ENCODE measurements at regions of chr1 and their contacts with region 1.

Region 1: GRCh38 chr1:172398970-172399755 is 21.3 kb upstream of the C1orf105 start:
- DNase-seq: peak; percentile 72
- H3K4me3 Mint-ChIP-seq: peak overlapping the region; percentile 7
- H3K27ac Mint-ChIP-seq: peak overlapping the region; percentile 61
- H3K4me1 Mint-ChIP-seq: peaks cover 46% of the 10 kb centered on the region
- H3K27me3 Mint-ChIP-seq: no peaks in the 10 kb centered on the region

Region 2: DNA sequence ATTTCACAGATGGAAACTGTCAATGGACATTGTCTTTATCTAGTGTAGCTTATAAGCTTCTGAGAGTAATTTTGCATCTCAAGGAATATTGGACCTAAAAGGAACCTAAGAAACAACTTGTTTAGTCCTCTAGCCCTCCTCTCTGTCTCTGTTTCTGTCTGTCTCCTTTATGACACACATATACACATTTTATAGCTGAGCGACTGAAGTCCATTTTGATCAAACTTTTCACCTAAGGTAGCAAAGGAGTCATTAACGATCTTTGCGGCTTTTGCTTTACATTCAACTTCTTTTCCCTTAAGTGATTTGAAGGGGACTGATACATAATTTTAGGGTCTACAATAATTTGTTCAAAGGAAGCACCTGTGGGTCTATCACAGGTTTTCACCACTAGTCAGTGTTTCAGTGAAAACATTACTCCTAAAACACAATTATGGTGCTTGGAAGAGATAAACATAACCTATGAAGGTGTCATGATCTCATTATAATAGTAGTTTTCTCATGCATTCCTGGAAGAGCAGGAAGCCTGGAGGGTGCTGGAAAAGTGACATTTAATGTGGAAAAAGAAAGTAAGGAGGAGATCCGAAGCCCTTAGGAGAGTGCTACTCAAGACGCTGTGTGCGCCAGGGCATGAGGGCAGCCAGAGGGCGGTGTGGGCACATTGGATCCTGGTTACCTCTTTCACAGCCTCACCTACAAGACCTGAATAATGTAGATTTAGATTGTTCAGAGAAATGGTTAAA is 309.2 kb before region 1 on chr1:
- intact Hi-C with region 1: loop called (anchors 1 kb)
- DNase-seq: peak; percentile 86
- H3K4me3 Mint-ChIP-seq: no peak overlapping the region
- H3K27ac Mint-ChIP-seq: no peak overlapping the region
- H3K4me1 Mint-ChIP-seq: peaks cover 7% of the 10 kb centered on the region
- H3K27me3 Mint-ChIP-seq: no peaks in the 10 kb centered on the region

Region 3: DNA sequence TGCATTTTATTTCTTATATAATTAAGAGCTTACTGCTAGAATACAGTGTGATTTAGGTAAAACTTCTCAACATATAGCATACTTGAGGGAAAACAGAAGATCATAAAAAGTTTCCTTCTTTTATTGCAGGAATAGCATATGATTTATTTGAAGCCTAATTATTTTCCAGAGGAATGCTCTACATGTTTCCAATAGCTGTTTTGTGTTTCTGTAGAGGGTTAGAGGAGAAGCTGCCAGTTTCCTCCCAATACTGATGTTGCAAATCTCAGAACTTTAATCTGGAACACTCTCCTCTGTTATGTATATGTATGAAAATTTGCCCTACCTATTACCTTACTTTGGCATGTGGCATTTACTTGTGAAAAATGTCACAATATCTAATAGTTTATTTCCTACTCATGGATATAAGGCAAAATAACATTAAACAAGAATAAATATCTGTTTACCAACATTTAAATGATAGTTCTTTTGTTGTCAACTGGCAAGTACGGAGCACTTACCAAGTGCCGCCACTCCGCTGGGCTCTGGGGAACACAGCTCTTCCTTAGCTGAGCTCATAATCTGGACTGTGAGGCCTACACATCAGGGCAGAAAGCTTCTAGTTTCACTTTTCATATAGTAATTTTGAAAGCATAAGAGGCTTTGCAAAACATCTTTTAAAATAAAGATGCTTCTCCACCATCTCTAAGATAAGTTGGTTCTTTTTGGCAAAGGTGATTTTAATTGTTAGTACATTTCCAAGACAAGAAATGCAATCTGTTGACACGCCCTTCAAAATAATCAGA is 218.5 kb before region 1 on chr1:
- intact Hi-C with region 1: loop called (anchors 2 kb)
- DNase-seq: peak; percentile 84
- H3K4me3 Mint-ChIP-seq: peak overlapping the region; percentile 82
- H3K27ac Mint-ChIP-seq: peak overlapping the region; percentile 96
- H3K4me1 Mint-ChIP-seq: peaks cover 38% of the 10 kb centered on the region
- H3K27me3 Mint-ChIP-seq: no peaks in the 10 kb centered on the region

Region 4: GRCh38 chr1:172338295-172338735 is 60.8 kb before region 1 on chr1:
- intact Hi-C with region 1: loop called (anchors 1 kb)
- DNase-seq: peak; percentile 72
- H3K4me3 Mint-ChIP-seq: peak overlapping the region; percentile 16
- H3K27ac Mint-ChIP-seq: peak overlapping the region; percentile 51
- H3K4me1 Mint-ChIP-seq: peaks cover 36% of the 10 kb centered on the region
- H3K27me3 Mint-ChIP-seq: no peaks in the 10 kb centered on the region

Region 5: DNA sequence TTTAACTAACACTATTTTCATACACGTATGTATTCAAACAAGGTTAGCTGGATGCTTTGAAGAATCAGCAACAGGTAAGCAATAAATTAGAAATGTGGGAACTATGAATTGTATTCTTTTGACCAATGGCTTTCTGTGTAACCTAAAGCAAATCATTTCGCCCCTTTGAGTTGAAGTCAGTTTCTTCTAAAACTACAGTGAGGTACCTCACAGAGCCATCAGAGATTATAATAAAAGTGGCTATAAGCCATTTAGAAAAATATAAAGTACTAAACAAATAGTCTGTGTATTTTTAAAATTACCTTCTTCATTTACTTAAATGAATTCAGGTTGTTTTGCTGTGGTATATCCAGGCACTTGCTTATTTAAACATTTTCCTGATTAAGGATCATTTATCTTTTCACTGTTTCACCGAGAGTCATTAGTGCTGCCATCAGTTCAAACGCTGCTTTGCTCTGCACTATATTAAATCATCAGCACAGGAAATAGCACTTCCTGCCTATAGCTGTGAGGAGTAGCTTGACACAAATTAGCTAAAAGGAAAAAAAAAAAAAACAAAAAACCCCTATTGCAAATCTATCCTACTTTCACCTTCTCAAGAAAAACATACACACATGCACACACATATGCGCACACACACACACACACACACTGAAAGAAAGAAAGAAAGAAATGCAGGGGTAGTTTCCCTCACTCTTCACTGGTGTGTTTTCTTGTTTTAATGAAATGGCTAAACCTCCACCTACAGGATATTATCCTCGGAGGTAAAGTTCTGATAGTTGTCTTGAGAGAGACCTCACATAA is 18.5 kb before region 1 on chr1:
- intact Hi-C with region 1: loop called (anchors 1 kb)
- DNase-seq: peak; percentile 80
- H3K4me3 Mint-ChIP-seq: peak overlapping the region; percentile 57
- H3K27ac Mint-ChIP-seq: peak overlapping the region; percentile 86
- H3K4me1 Mint-ChIP-seq: peaks cover 18% of the 10 kb centered on the region
- H3K27me3 Mint-ChIP-seq: no peaks in the 10 kb centered on the region